ENCODE measurements at regions of chr10 and their contacts with region 1.

Region 1: DNA sequence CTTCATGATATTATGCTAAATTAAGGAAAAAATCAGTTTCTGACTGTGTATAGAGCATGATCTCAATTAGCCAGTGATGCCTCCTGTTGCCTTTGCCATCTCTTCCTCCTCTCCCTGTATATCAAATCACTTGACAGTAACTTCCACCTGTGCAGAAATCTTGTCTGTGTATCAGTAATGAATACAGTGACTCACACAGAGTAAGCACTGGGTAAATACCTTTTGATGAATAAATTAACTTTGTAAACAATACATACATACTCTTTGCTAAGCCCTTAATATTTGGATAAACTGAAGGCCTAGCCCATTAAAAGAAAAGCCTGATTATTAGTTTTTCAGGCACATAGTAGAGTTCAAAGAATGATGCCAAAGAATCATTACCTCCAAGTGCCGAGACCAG is 610.6 kb upstream of the NRP1 start:
- DNase-seq: no peak
- ATAC-seq: no peak
- H3K4me3 ChIP-seq: no peak overlapping the region
- H3K4me3 Mint-ChIP-seq: no peak overlapping the region
- H3K27ac ChIP-seq: no peak overlapping the region
- H3K27ac Mint-ChIP-seq: no peak overlapping the region
- H3K4me1 ChIP-seq: no peaks in the 10 kb centered on the region
- H3K4me1 Mint-ChIP-seq: no peaks in the 10 kb centered on the region
- H3K27me3 ChIP-seq: no peaks in the 10 kb centered on the region
- H3K27me3 Mint-ChIP-seq: no peaks in the 10 kb centered on the region
- CTCF ChIP-seq: no peak

Region 2: GRCh38 chr10:34001087-34001580 is 56.1 kb after region 1 on chr10:
- CTCF ChIA-PET with region 1: no interaction called
- POLR2A ChIA-PET with region 1: no interaction called
- intact Hi-C with region 1: loop called in 1 of 2 experiments (anchors 2 kb)
- DNase-seq: no peak
- ATAC-seq: no peak
- H3K4me3 ChIP-seq: no peak overlapping the region
- H3K4me3 Mint-ChIP-seq: no peak overlapping the region
- H3K27ac ChIP-seq: no peak overlapping the region
- H3K27ac Mint-ChIP-seq: no peak overlapping the region
- H3K4me1 ChIP-seq: no peaks in the 10 kb centered on the region
- H3K4me1 Mint-ChIP-seq: no peaks in the 10 kb centered on the region
- H3K27me3 ChIP-seq: no peaks in the 10 kb centered on the region
- H3K27me3 Mint-ChIP-seq: no peaks in the 10 kb centered on the region
- CTCF ChIP-seq: no peak

Region 3: DNA sequence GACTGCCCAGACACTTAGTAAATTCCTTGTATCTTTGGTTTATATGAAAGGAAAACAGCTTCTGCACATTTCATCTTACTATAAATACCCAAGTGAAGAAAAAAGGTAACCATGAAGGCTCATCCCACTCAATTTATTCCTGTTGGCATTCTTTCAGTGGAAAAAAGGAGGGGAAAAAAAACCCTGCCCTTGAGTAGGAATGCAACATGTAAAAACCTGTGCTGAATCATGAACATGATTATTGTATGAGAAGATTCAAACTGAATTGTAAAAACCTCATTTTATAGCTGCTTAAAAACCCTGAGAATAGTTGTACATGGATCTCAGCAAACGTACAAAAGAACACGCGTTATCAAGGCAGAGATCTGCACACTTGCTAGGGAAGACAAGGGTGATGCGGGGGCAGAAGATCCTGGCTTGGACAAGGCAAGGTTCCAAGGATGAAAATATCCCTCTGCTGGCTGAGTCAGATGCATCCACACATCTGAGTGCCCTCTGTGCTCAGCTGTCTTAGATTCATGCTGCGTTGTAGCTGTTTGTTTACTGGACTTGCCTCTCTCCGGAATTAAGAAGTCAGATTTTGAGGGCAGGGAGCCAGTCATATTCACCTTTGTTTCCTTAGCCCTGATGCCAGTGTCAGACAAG is 211.8 kb after region 1 on chr10:
- CTCF ChIA-PET with region 1: no interaction called
- POLR2A ChIA-PET with region 1: no interaction called
- intact Hi-C with region 1: no loop called
- DNase-seq: no peak
- ATAC-seq: no peak
- H3K4me3 ChIP-seq: no peak overlapping the region
- H3K4me3 Mint-ChIP-seq: no peak overlapping the region
- H3K27ac ChIP-seq: no peak overlapping the region
- H3K27ac Mint-ChIP-seq: no peak overlapping the region
- H3K4me1 ChIP-seq: no peaks in the 10 kb centered on the region
- H3K4me1 Mint-ChIP-seq: no peaks in the 10 kb centered on the region
- H3K27me3 ChIP-seq: no peaks in the 10 kb centered on the region
- H3K27me3 Mint-ChIP-seq: peaks cover 7% of the 10 kb centered on the region
- CTCF ChIP-seq: no peak

Region 4: DNA sequence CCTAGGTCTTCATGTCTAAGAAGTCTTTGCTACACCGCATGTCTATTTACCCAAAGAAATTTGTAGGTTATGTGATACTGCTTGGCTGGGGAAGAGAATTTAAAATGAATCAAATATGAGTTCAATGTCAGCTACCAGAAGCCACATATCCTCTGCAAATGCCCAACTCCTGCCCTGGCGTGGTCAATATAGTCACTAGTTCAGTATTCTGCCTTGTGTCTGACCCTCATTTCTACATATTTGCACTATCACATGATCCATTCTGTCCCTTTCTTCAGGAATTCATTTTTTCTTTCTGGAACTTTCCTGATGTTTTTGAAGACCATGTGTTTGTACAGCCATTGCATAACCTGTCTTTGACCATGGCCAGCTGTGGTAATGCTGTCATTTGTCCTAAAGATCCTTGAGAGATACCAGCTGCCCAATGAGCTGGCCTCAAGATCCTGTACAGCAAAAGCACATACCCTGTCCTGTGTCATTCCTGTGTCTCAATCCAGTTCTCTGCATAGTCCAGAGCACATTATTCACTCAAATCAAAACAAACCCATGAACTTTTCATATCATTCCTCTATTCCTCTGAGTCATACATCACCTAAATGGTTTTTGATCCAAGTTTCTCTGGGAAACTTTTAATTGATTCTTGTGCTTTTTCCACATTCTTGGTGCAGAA is 345.5 kb after region 1 on chr10:
- CTCF ChIA-PET with region 1: no interaction called
- POLR2A ChIA-PET with region 1: no interaction called
- intact Hi-C with region 1: no loop called
- DNase-seq: no peak
- ATAC-seq: no peak
- H3K4me3 ChIP-seq: no peak overlapping the region
- H3K4me3 Mint-ChIP-seq: no peak overlapping the region
- H3K27ac ChIP-seq: no peak overlapping the region
- H3K27ac Mint-ChIP-seq: no peak overlapping the region
- H3K4me1 ChIP-seq: no peaks in the 10 kb centered on the region
- H3K4me1 Mint-ChIP-seq: no peaks in the 10 kb centered on the region
- H3K27me3 ChIP-seq: peaks cover 0 to 3% of the 10 kb centered on the region in 2 experiments
- H3K27me3 Mint-ChIP-seq: peaks cover 11% of the 10 kb centered on the region
- CTCF ChIP-seq: no peak